Panc1 (cell line): ENCODE measurements at regions of chr11 and their contacts with region 1.

Region 1: GRCh38 chr11:122874991-122875390 is 7.6 kb upstream of the JHY start:
- DNase-seq: no peak
- ATAC-seq: no peak
- H3K4me3 ChIP-seq: no peak overlapping the region
- H3K27ac ChIP-seq: no peak overlapping the region
- H3K4me1 ChIP-seq: peaks cover 8% of the 10 kb centered on the region; the same call in 1 of the 2 replicates
- H3K27me3 ChIP-seq: no peaks in the 10 kb centered on the region
- CTCF ChIP-seq: no peak

Region 2: DNA sequence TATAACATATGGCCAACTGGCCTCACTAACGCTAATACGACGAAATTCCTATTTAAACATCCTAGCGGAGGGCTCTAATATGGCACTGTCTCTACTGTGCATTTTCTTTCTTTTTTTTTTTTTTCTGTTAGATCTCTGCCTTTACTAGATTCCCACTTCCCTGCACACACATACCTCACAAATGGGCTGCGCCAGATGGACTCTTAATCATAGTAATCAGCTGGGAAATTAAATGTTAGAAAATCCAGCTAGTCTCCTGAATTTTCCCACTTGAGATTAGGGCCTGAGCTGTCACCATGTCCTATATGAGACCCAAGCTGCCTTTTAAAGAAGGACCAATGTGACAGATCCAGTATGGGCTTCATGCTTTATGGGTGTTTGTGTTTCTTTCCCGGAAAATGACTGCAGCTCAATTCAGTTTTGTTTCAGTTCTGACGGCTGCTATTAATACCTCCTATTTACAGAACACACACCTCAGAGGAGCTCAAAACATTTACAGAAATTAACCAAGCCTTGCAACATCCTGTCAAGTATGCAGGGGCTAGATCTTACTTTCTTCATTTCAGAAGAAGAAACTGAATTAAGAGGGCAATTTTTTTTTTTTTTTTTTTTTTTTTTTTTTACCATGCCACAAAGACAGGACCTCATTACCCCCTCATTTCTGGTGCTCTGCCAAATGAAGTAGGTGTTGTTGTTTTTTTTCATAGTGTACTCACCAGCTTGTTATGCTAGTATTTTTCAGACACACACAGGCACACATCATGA is 709.2 kb before region 1 on chr11:
- CTCF ChIA-PET with region 1: no interaction called
- POLR2A ChIA-PET with region 1: interaction called, 12 read pairs
- in situ Hi-C with region 1: no loop called
- intact Hi-C with region 1: no loop called
- DNase-seq: no peak
- ATAC-seq: no peak
- H3K4me3 ChIP-seq: 0 out of 4 replicates have a peak overlapping the region, but pooled peaks of 1 of the 2 experiments have one; percentile 0
- H3K27ac ChIP-seq: peak overlapping the region; percentile 72
- H3K4me1 ChIP-seq: peaks cover 36% of the 10 kb centered on the region
- H3K27me3 ChIP-seq: no peaks in the 10 kb centered on the region
- CTCF ChIP-seq: no peak

Region 3: GRCh38 chr11:122690801-122691548 is 184.0 kb before region 1 on chr11:
- CTCF ChIA-PET with region 1: no interaction called
- POLR2A ChIA-PET with region 1: no interaction called
- in situ Hi-C with region 1: no loop called
- intact Hi-C with region 1: no loop called
- DNase-seq: no peak
- ATAC-seq: no peak
- H3K4me3 ChIP-seq: no peak overlapping the region
- H3K27ac ChIP-seq: peak overlapping the region; percentile 0
- H3K4me1 ChIP-seq: peaks cover 12% of the 10 kb centered on the region; the same call in 1 of the 2 replicates
- H3K27me3 ChIP-seq: no peaks in the 10 kb centered on the region
- CTCF ChIP-seq: no peak

Region 4: GRCh38 chr11:122963961-122964360 is 89.0 kb after region 1 on chr11:
- CTCF ChIA-PET with region 1: no interaction called
- POLR2A ChIA-PET with region 1: no interaction called
- in situ Hi-C with region 1: no loop called
- intact Hi-C with region 1: no loop called
- DNase-seq: no peak
- ATAC-seq: no peak
- H3K4me3 ChIP-seq: no peak overlapping the region
- H3K27ac ChIP-seq: no peak overlapping the region
- H3K4me1 ChIP-seq: no peaks in the 10 kb centered on the region
- H3K27me3 ChIP-seq: peaks cover 32% of the 10 kb centered on the region
- CTCF ChIP-seq: no peak

Region 5: GRCh38 chr11:123261345-123262106 is 386.5 kb after region 1 on chr11:
- CTCF ChIA-PET with region 1: no interaction called
- POLR2A ChIA-PET with region 1: interaction called, 11 read pairs
- in situ Hi-C with region 1: no loop called
- intact Hi-C with region 1: no loop called
- DNase-seq: peak; percentile 13
- ATAC-seq: peak; percentile 97
- H3K4me3 ChIP-seq: peak overlapping the region; percentile 21 to 60
- H3K27ac ChIP-seq: 0 out of 2 replicates have a peak overlapping the region, but pooled peaks have one; percentile 34
- H3K4me1 ChIP-seq: peaks cover 7% of the 10 kb centered on the region; the same call in 1 of the 2 replicates
- H3K27me3 ChIP-seq: peaks cover 10% of the 10 kb centered on the region; the same call in 1 of the 2 replicates
- CTCF ChIP-seq: peak; percentile 99

Region 6: GRCh38 chr11:123413636-123414035 is 538.6 kb after region 1 on chr11:
- CTCF ChIA-PET with region 1: no interaction called
- POLR2A ChIA-PET with region 1: no interaction called
- in situ Hi-C with region 1: no loop called
- intact Hi-C with region 1: no loop called
- DNase-seq: no peak
- ATAC-seq: no peak
- H3K4me3 ChIP-seq: no peak overlapping the region
- H3K27ac ChIP-seq: no peak overlapping the region
- H3K4me1 ChIP-seq: no peaks in the 10 kb centered on the region
- H3K27me3 ChIP-seq: peaks cover 26% of the 10 kb centered on the region
- CTCF ChIP-seq: no peak